IMR-90 (cell line): ENCODE measurements at regions of chr10 and their contacts with region 1.

Region 1: DNA sequence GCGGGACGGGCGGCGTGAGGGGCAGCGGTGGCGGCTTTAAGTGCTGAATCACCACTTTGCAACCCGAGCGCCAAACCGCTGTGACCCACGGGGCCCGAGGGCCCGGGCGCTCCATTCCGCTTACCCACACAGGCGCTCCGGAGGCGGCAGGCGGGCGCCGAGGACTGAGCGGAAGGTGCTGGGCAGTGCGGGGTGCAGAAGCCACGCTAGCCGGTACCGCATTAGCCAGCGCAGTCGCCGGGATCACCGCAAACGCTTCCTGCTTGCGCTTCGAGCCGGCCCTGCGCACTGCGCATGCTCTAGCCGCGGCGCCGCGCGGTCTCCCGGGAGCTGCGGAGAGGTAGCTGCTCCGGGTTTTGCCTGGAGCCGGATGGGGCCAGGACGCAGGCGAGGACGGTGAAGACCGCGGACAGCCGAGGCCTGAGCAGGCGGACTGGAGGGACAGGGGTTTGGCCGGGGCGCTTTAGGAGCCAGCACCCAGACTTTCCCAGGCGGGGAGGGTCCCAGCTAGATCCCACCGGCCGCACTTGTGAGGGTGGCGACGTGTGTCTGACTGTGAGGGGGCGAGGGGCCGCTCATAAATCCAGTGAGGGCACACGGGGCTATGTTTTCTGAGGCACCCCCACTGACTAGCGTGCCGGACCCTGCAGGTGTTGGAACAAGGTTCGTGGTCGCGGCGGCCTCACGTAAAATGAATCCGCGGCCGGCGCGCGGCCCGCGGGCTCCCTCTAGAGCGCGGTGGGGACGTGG is at the start of gene IDE:
- DNase-seq: peak; percentile 88
- ATAC-seq: peak; percentile 79
- H3K4me3 ChIP-seq: peak within 1 kb of the TSS; percentile 70
- H3K27ac ChIP-seq: peak within 1 kb of the TSS; percentile 91
- H3K4me1 ChIP-seq: peaks cover 4% of the 10 kb centered on the region
- H3K27me3 ChIP-seq: no peaks in the 10 kb centered on the region
- CTCF ChIP-seq: peak; percentile 92
- POLR2A ChIP-seq: no peak
- RAD21 ChIP-seq: peak; percentile 83
- total RNA-seq, gene IDE: 26.4 and 27.4 TPM in 2 replicates

Region 2: GRCh38 chr10:91797874-91798648 is 775.9 kb before region 1 on chr10 and contains the start of gene TNKS2:
- CTCF ChIA-PET with region 1: no interaction called
- POLR2A ChIA-PET with region 1: no interaction called
- dilution Hi-C with region 1: no loop called
- in situ Hi-C with region 1: no loop called
- intact Hi-C with region 1: no loop called
- DNase-seq: peak; percentile 91
- ATAC-seq: peak; percentile 94
- H3K4me3 ChIP-seq: peak within 1 kb of the TSS; percentile 92
- H3K27ac ChIP-seq: peak within 1 kb of the TSS; percentile 95
- H3K4me1 ChIP-seq: 0 out of 2 replicates have a peak, but pooled peaks cover 2% of the 10 kb centered on the region
- H3K27me3 ChIP-seq: no peaks in the 10 kb centered on the region
- CTCF ChIP-seq: no peak
- POLR2A ChIP-seq: peak; percentile 86
- RAD21 ChIP-seq: no peak
- total RNA-seq, gene TNKS2: 41.4 and 49.4 TPM in 2 replicates

Region 3: GRCh38 chr10:92087750-92088395 is 486.1 kb before region 1 on chr10:
- CTCF ChIA-PET with region 1: no interaction called
- POLR2A ChIA-PET with region 1: no interaction called
- dilution Hi-C with region 1: no loop called
- in situ Hi-C with region 1: no loop called
- intact Hi-C with region 1: loop called (anchors 10 kb)
- DNase-seq: peak; percentile 82
- ATAC-seq: peak; percentile 98
- H3K4me3 ChIP-seq: no peak overlapping the region
- H3K27ac ChIP-seq: no peak overlapping the region
- H3K4me1 ChIP-seq: no peaks in the 10 kb centered on the region
- H3K27me3 ChIP-seq: no peaks in the 10 kb centered on the region
- CTCF ChIP-seq: peak; percentile 96
- POLR2A ChIP-seq: peak; percentile 50; the same call in 1 of the 2 replicates
- RAD21 ChIP-seq: peak; percentile 96

Region 4: GRCh38 chr10:92517034-92517655 is 56.8 kb before region 1 on chr10:
- CTCF ChIA-PET with region 1: interaction called, 20 read pairs
- POLR2A ChIA-PET with region 1: no interaction called
- dilution Hi-C with region 1: no loop called
- in situ Hi-C with region 1: loop called (anchors 5 kb)
- intact Hi-C with region 1: loop called (anchors 1 kb)
- DNase-seq: peak; percentile 80
- ATAC-seq: peak; percentile 90
- H3K4me3 ChIP-seq: no peak overlapping the region
- H3K27ac ChIP-seq: no peak overlapping the region
- H3K4me1 ChIP-seq: peaks cover 2% of the 10 kb centered on the region; the same call in 1 of the 2 replicates
- H3K27me3 ChIP-seq: no peaks in the 10 kb centered on the region
- CTCF ChIP-seq: peak; percentile 76
- POLR2A ChIP-seq: no peak
- RAD21 ChIP-seq: peak; percentile 68

Region 5: GRCh38 chr10:92530421-92530820 is 43.6 kb before region 1 on chr10:
- CTCF ChIA-PET with region 1: interaction called, 6 read pairs
- POLR2A ChIA-PET with region 1: interaction called, 3 read pairs
- dilution Hi-C with region 1: no loop called
- in situ Hi-C with region 1: no loop called
- intact Hi-C with region 1: loop called (anchors 5 kb)
- DNase-seq: peak; percentile 31
- ATAC-seq: peak; percentile 92
- H3K4me3 ChIP-seq: no peak overlapping the region
- H3K27ac ChIP-seq: peak overlapping the region; percentile 2; the same call in 1 of the 2 replicates
- H3K4me1 ChIP-seq: peaks cover 1% of the 10 kb centered on the region; the same call in 1 of the 2 replicates
- H3K27me3 ChIP-seq: no peaks in the 10 kb centered on the region
- CTCF ChIP-seq: no peak
- POLR2A ChIP-seq: no peak
- RAD21 ChIP-seq: no peak

Region 6: DNA sequence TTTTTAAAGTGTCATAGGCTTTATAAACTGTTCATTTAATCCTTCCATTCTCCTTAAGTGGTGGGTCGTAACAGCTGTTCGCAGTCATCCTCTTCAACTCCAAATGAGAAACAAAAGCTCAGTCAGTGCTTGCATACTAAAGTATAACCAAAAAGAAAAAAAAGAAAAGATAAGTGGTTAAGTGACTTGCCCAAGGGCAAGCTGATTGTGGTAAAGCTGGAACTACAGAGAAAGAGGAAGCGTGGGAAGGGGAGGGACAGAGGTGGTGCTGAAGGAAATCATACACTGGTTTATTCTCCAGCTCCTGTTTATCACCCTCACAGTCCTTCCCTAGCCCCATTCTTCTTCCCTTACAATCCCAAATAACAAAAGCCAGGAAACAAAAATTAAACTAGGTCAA is 29.7 kb before region 1 on chr10:
- CTCF ChIA-PET with region 1: no interaction called
- POLR2A ChIA-PET with region 1: interaction called, 3 read pairs
- dilution Hi-C with region 1: no loop called
- in situ Hi-C with region 1: no loop called
- intact Hi-C with region 1: loop called (anchors 2 kb)
- DNase-seq: peak; percentile 48
- ATAC-seq: peak; percentile 27; the same call in 1 of the 2 replicates
- H3K4me3 ChIP-seq: no peak overlapping the region
- H3K27ac ChIP-seq: no peak overlapping the region
- H3K4me1 ChIP-seq: peaks cover 2% of the 10 kb centered on the region
- H3K27me3 ChIP-seq: no peaks in the 10 kb centered on the region
- CTCF ChIP-seq: no peak
- POLR2A ChIP-seq: no peak
- RAD21 ChIP-seq: no peak

Region 7: GRCh38 chr10:92592761-92593618 is 19.0 kb after region 1 on chr10 and contains the start of gene KIF11:
- CTCF ChIA-PET with region 1: interaction called, 7 read pairs
- POLR2A ChIA-PET with region 1: no interaction called
- dilution Hi-C with region 1: no loop called
- in situ Hi-C with region 1: no loop called
- intact Hi-C with region 1: loop called (anchors 2 kb)
- DNase-seq: peak; percentile 96
- ATAC-seq: peak; percentile 93
- H3K4me3 ChIP-seq: peak within 1 kb of the TSS; percentile 78
- H3K27ac ChIP-seq: peak within 1 kb of the TSS; percentile 86
- H3K4me1 ChIP-seq: peaks cover 7% of the 10 kb centered on the region
- H3K27me3 ChIP-seq: no peaks in the 10 kb centered on the region
- CTCF ChIP-seq: no peak
- POLR2A ChIP-seq: peak; percentile 47
- RAD21 ChIP-seq: no peak
- total RNA-seq, gene KIF11: 18.3 and 35.0 TPM in 2 replicates